Naive thymus-derived CD4-positive, alpha-beta T cell (primary cell): ENCODE measurements at regions of chr1 and their contacts with region 1.

Region 1: DNA sequence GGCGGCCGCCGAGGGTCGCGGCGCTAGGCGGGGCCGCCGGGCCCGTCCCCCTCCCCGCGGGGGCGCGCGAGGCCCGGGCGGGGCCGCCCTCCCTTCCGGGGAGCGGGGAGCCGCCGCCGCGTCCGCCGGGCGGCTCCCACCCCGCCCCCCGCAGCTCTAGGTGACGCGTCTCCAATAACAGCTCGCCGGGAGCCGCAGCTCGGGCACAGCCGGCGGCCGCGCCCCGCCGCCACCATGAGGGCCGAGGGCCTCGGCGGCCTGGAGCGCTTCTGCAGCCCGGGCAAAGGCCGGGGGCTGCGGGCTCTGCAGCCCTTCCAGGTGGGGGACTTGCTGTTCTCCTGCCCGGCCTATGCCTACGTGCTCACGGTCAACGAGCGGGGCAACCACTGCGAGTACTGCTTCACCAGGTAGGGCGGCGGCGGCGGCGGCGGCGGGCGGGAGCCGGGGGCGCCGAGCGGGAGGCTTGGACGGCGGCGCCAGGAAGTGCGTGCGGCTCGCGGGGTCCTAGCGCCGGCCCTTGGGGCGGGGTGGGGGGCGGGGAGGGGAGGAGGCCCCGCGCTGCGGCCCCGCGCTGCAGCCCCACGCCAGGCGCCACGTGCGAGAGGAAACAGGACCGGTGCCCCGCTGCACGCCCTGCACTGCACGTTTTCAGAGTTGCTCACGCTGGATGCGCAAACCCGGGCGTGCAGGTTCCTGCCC is at the start of gene SMYD2:
- DNase-seq: peak; percentile 49 to 77 (median 72)
- ATAC-seq: peak; percentile 86
- H3K4me3 ChIP-seq: peak within 1 kb of the TSS; percentile 88
- H3K4me3 Mint-ChIP-seq: peak within 1 kb of the TSS; percentile 79 to 98 (median 90)
- H3K27ac ChIP-seq: peak within 1 kb of the TSS; percentile 82
- H3K27ac Mint-ChIP-seq: peak within 1 kb of the TSS; percentile 81 to 95 (median 91)
- H3K4me1 ChIP-seq: peaks cover 17 to 34% of the 10 kb centered on the region in 2 donors
- H3K4me1 Mint-ChIP-seq: peaks cover 30 to 64% (median 45%) of the 10 kb centered on the region in 7 donors
- H3K27me3 ChIP-seq: no peaks in the 10 kb centered on the region
- H3K27me3 Mint-ChIP-seq: no peaks in the 10 kb centered on the region
- total RNA-seq, gene SMYD2: 24.3 to 39.5 (median 34.4) TPM

Region 2: DNA sequence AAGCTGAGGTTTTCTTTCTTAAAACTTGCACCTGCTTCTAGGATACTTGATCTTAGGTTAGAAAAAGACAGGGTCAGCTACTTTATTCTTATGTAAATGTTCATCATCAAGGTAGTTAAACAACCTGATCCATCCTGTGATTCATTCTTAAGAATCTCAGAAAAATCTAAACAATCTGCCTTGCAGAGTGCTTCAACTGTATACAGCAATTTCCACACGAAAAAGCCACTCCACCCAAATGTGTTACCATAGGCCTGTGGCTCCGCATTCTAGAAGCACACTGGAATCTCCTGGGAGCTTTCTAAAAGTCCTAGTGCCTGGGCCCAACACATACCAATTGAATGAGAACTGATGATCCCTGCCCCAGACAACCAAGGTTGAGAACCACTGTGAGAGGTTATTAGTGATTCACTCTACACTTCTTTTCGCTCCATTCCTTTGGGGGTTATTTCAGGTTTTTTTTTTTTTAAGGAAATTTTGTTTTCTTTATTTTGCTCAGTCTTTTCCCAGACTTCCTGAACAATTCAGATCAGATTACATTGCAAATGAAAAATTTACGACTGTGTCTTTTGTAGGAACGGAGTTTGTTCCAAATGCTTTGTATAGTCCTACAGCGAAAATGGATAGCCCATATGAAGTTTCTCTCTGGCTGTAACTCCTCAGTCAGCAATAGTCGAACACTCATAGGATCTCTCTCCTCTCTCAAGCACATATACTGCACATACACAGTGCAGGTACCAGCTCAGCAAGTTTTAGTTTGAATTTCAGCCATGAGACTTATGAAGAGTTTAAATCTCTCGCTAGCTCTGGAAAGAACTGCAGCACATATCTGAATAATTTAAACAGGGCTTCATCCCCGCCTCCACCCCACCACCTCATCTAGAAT is 15.9 kb after region 1 on chr1:
- CTCF ChIA-PET with region 1: no interaction called
- POLR2A ChIA-PET with region 1: interaction called, 4 read pairs
- intact Hi-C with region 1: loop called in 1 of 2 experiments (anchors 1 kb)
- DNase-seq: no peak
- ATAC-seq: no peak
- H3K4me3 ChIP-seq: no peak overlapping the region
- H3K4me3 Mint-ChIP-seq: no peak overlapping the region
- H3K27ac ChIP-seq: no peak overlapping the region
- H3K27ac Mint-ChIP-seq: peak overlapping the region in 1 of 9 donors; percentile 33
- H3K4me1 ChIP-seq: peaks cover 0 to 5% of the 10 kb centered on the region in 2 donors
- H3K4me1 Mint-ChIP-seq: peaks cover 7 to 56% (median 31%) of the 10 kb centered on the region in 7 donors
- H3K27me3 ChIP-seq: no peaks in the 10 kb centered on the region
- H3K27me3 Mint-ChIP-seq: no peaks in the 10 kb centered on the region

Region 3: GRCh38 chr1:214310010-214310409 is 28.8 kb after region 1 on chr1:
- CTCF ChIA-PET with region 1: no interaction called
- POLR2A ChIA-PET with region 1: no interaction called
- intact Hi-C with region 1: loop called (anchors 1 to 2 kb)
- DNase-seq: no peak
- ATAC-seq: no peak
- H3K4me3 ChIP-seq: no peak overlapping the region
- H3K4me3 Mint-ChIP-seq: peak overlapping the region in 9 of 10 donors; percentile 7 to 78 (median 57)
- H3K27ac ChIP-seq: no peak overlapping the region
- H3K27ac Mint-ChIP-seq: peak overlapping the region in 2 of 9 donors; percentile 22 to 49
- H3K4me1 ChIP-seq: peaks cover 17% of the 10 kb centered on the region in 2 donors
- H3K4me1 Mint-ChIP-seq: peaks cover 21 to 48% (median 43%) of the 10 kb centered on the region in 7 donors
- H3K27me3 ChIP-seq: no peaks in the 10 kb centered on the region
- H3K27me3 Mint-ChIP-seq: no peaks in the 10 kb centered on the region

Region 4: DNA sequence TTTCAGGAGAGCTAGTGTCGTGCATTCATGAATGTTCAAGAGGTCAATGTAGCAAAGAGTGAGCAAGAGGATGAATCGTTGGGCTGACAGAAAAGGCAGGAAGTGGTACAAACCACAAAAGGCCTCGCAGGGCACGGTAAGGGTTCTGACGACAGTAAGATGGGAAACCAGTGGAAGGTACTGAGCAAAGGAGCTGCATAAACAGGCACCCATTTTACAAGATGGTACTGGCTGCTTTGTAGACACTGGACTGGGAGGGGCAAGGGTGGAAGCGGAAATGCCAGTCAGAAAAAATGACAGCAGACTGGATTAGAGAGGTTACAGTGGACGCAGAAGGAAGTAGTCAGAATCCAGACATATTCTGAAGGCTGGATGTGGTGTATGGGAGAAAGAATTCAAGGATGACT is 146.7 kb after region 1 on chr1:
- CTCF ChIA-PET with region 1: no interaction called
- POLR2A ChIA-PET with region 1: no interaction called
- intact Hi-C with region 1: loop called (anchors 2 to 5 kb)
- DNase-seq: peak in 8 of 9 donors; percentile 54 to 82 (median 71)
- ATAC-seq: peak; percentile 95
- H3K4me3 ChIP-seq: no peak overlapping the region
- H3K4me3 Mint-ChIP-seq: peak overlapping the region; percentile 50 to 81 (median 64)
- H3K27ac ChIP-seq: no peak overlapping the region
- H3K27ac Mint-ChIP-seq: peak overlapping the region; percentile 64 to 98 (median 85)
- H3K4me1 ChIP-seq: peaks cover 11 to 18% of the 10 kb centered on the region in 2 donors
- H3K4me1 Mint-ChIP-seq: peaks cover 18 to 48% (median 34%) of the 10 kb centered on the region in 7 donors
- H3K27me3 ChIP-seq: no peaks in the 10 kb centered on the region
- H3K27me3 Mint-ChIP-seq: peaks cover 0 to 3% (median 0%) of the 10 kb centered on the region in 5 donors

Region 5: DNA sequence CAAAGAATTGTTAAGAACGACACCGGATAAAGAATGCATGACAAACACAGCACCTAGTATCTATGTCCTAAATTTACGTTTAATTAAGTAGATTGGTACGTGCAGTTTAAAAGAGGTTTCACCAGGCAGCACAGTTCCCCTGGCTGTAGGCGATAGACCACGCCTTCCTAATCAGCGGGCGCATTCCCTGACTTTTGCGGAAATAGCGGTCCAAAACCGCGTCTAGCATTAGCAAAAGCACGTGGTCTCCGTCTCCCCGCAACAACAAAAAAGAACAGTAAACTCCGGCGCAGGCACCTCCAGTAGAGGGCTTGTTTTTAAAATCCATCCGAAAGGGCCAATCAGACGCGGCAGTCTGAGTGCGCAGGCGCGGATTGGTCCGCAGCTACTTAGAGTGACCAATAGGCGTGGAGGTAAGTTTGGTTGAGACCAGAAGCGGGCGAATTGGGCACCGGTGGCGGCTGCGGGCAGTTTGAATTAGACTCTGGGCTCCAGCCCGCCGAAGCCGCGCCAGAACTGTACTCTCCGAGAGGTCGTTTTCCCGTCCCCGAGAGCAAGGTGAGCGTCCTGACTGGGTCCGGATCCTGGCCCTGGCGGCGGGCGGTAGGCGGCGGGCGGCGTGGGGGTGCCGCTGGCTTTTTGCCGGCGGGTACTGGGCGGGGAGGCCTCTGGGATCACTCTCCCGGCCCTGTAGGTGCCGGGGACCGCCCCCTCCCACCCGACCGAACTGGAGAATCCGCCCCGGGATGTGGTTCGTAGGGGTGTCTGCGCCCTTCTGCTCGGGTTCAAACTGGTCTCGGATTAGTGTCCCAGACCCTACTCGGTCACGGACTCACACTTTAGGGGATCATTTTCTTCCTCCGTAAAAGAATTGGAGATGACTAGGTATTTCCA is 321.8 kb after region 1 on chr1 and contains the start of gene CENPF:
- CTCF ChIA-PET with region 1: no interaction called
- POLR2A ChIA-PET with region 1: no interaction called
- intact Hi-C with region 1: loop called (anchors 1 kb)
- DNase-seq: peak; percentile 79 to 96 (median 94)
- ATAC-seq: peak; percentile 99
- H3K4me3 ChIP-seq: peak within 1 kb of the TSS; percentile 60
- H3K4me3 Mint-ChIP-seq: peak within 1 kb of the TSS; percentile 86 to 97 (median 92)
- H3K27ac ChIP-seq: peak within 1 kb of the TSS; percentile 48
- H3K27ac Mint-ChIP-seq: peak within 1 kb of the TSS; percentile 52 to 98 (median 87)
- H3K4me1 ChIP-seq: peaks cover 0 to 6% of the 10 kb centered on the region in 2 donors
- H3K4me1 Mint-ChIP-seq: peaks cover 6 to 29% (median 24%) of the 10 kb centered on the region in 7 donors
- H3K27me3 ChIP-seq: no peaks in the 10 kb centered on the region
- H3K27me3 Mint-ChIP-seq: peaks cover 0 to 2% (median 0%) of the 10 kb centered on the region in 5 donors
- total RNA-seq, gene CENPF: 2.1 to 79.9 (median 4.1) TPM